Astrocyte of the cerebellum (primary cell): ENCODE measurements at regions of chr2 and their contacts with region 1.

Region 1: GRCh38 chr2:11124503-11125068 is 30.7 kb upstream of the SLC66A3 start:
- DNase-seq: no peak
- H3K4me3 ChIP-seq: no peak overlapping the region
- CTCF ChIP-seq: peak; percentile 96

Region 2: DNA sequence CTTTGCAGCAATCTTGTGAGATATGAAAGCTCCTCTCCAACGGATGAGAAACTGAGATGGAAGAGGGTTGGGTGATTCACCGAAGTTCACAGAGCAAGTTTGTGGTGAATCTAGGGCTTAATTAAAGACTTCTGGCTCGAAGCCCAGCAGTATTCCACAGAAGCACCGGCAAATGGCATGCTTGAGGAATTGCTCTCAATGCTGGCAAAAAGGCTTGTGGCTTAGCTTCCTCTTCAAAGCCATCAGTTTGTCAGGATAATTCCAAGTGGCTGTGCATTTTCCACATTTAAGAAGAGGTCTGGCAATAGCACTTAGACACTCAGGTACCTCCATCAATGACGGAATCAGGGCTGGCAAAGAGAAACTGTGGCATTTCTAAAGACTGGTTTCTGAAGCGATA is 68.0 kb before region 1 on chr2:
- in situ Hi-C with region 1: no loop called
- DNase-seq: peak; percentile 97
- H3K4me3 ChIP-seq: no peak overlapping the region
- CTCF ChIP-seq: no peak

Region 3: DNA sequence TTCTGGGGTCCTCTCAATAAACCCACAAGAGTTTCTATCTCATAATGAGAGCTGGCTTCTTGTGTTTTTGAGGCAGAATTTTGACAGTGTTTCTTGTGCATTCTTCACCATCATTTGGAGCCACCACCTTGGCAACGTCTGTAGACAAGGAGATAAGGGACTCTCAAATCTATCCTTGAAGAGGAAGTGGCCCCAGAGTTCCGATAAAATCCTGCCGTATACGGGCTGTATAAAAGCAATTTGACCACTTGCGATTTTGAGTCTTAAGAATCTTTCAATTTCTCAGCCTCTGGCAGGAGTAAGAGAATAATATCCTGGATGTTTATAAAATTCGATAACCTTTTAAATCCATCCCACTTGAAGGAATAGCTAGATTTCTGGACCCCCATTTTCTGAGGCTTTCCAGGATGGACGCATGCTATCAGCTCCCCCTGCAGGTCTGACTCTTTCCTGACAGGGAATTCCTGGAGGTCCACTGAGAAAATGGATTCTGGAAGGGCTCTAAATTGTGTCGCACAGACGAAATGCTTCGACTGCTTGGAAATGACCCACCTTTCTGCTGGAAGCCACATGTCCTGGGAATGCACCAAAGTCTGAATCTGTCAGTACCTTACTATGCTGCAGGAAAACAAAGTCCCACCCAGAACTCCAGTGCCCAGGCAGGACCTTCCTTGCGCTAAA is 287.3 kb after region 1 on chr2:
- in situ Hi-C with region 1: loop called (anchors 25 kb)
- DNase-seq: peak; percentile 22
- H3K4me3 ChIP-seq: no peak overlapping the region
- CTCF ChIP-seq: peak; percentile 84